ENCODE measurements at regions of chr10 and their contacts with region 1.

Region 1: DNA sequence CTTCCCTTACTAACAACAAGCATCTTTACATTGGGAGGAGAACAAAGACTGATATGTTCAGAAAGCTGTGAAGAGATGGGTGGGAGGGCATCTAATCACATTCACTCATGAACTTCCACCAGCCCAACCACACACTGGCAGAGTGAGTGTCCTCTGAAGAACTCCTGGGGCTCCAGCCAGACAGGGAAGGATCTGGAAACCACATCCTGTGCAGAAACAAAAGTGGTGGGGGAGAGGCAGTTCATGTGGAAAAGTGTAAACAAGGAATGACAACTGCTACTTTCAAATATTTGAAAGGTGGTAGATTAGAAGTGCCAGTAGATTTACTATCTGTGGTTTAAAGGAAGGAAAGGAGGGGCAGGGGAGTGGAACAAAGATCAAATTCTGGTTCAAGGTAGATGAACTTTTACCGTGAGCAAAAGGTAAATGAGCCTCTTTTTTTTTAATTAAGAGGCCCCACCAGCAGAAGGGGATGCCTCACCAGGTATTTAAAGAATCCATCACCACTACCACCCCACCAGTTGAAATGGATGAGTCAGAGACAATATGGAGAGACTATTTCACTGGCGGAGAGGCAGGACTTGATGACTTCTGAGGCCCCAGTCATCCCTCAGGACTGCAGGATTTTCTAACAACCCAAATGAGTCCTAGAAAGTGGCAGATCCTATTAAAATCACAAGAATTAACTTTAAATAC is 34.5 kb downstream of the GOT1 start:
- DNase-seq: no peak
- H3K4me3 ChIP-seq: no peak overlapping the region
- H3K27ac ChIP-seq: no peak overlapping the region
- H3K4me1 ChIP-seq: no peaks in the 10 kb centered on the region
- H3K27me3 ChIP-seq: no peaks in the 10 kb centered on the region
- CTCF ChIP-seq: no peak
- EP300 ChIP-seq: no peak
- POLR2A ChIP-seq: no peak

Region 2: GRCh38 chr10:99266387-99266786 is 129.5 kb before region 1 on chr10:
- intact Hi-C with region 1: no loop called
- DNase-seq: no peak
- H3K4me3 ChIP-seq: no peak overlapping the region
- H3K27ac ChIP-seq: no peak overlapping the region
- H3K4me1 ChIP-seq: no peaks in the 10 kb centered on the region
- H3K27me3 ChIP-seq: no peaks in the 10 kb centered on the region
- CTCF ChIP-seq: no peak
- EP300 ChIP-seq: no peak
- POLR2A ChIP-seq: no peak

Region 3: DNA sequence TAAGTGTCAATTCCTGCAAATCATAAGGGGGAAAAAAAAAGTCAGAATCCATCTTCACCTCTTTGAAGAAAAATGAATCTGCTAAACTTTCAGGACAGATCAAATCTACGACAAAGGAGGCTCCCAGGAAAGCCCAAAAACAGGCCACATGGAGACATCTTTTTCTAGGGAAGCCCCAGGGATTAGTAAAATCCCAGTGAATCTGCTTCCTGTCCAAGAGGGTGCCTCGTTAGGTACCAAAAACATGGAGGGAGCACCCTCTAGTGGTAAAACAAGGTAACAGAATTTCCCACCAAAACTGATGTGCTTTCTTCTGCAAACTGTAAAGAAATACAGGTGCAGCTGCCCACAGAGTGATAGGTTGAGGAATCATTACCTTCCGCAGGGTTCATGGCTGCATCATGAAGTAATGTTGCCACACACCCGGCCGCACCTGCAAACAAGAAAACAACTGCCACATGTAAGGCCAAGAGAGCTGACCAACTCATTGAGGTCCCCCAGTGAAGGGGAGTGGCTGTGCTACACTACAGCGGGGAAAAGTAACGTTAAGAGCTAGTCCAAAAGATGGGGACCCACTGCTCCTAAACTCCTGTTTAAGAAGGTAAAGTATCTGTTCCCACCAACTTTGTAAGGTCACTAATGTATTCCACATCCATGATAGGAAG is 216.4 kb after region 1 on chr10:
- intact Hi-C with region 1: loop called in 2 of 4 experiments (anchors 2 to 10 kb)
- DNase-seq: peak in 1 of 5 donors; percentile 27
- H3K4me3 ChIP-seq: no peak overlapping the region
- H3K27ac ChIP-seq: no peak overlapping the region
- H3K4me1 ChIP-seq: peaks cover 2% of the 10 kb centered on the region
- H3K27me3 ChIP-seq: no peaks in the 10 kb centered on the region
- CTCF ChIP-seq: peak; percentile 36 to 71 (median 62)
- EP300 ChIP-seq: no peak
- POLR2A ChIP-seq: no peak

Region 4: DNA sequence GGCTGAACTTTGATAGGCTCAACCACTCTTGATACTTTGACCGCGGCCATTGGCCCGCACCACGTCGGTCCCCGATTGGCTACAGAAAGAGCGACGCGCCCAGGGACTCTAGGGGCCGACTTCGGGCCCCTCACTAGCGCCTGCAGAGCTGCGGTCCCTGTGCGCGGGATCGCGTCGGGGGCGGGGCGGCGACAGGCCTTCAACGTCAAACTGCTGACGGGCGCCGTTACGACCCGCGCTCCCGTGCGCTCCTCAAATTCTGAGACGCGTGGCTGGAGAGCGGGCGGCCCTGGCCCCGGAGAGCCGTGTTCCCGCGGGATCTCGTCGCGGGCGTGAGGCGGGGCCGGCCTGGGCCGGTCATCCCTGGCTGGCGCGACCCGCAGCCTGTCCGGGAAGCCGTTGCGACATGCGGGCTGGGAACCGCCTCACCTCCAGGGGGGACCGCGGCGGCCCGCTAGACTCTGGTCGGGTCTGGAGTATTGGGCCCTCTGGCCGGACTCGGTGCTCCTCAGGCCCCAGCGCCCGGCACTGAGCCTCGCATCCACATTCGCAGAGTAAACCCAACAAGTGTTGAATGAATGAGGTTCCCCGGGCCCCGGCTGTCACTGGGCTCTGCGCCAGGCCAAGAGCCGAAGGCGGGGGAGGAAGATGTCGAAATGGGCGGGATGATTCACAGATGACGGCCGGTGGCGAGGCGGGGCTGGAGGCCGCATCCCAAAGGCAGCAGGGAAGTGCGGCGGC is 225.0 kb after region 1 on chr10:
- intact Hi-C with region 1: loop called in 1 of 4 experiments (anchors 10 kb)
- DNase-seq: peak; percentile 95 to 97 (median 96)
- H3K4me3 ChIP-seq: peak overlapping the region; percentile 88
- H3K27ac ChIP-seq: peak overlapping the region; percentile 83 to 99
- H3K4me1 ChIP-seq: peaks cover 7% of the 10 kb centered on the region
- H3K27me3 ChIP-seq: no peaks in the 10 kb centered on the region
- CTCF ChIP-seq: no peak
- EP300 ChIP-seq: peak; percentile 90
- POLR2A ChIP-seq: peak; percentile 64

Region 5: GRCh38 chr10:99711129-99711719 is 315.3 kb after region 1 on chr10:
- intact Hi-C with region 1: loop called in 1 of 4 experiments (anchors 10 kb)
- DNase-seq: peak in 2 of 5 donors; percentile 28 to 38
- H3K4me3 ChIP-seq: no peak overlapping the region
- H3K27ac ChIP-seq: no peak overlapping the region
- H3K4me1 ChIP-seq: peaks cover 3% of the 10 kb centered on the region
- H3K27me3 ChIP-seq: no peaks in the 10 kb centered on the region
- CTCF ChIP-seq: peak in 2 of 3 donors; percentile 10 to 18
- EP300 ChIP-seq: no peak
- POLR2A ChIP-seq: no peak